ENCODE measurements at regions of chr2 and their contacts with region 1.

Region 1: DNA sequence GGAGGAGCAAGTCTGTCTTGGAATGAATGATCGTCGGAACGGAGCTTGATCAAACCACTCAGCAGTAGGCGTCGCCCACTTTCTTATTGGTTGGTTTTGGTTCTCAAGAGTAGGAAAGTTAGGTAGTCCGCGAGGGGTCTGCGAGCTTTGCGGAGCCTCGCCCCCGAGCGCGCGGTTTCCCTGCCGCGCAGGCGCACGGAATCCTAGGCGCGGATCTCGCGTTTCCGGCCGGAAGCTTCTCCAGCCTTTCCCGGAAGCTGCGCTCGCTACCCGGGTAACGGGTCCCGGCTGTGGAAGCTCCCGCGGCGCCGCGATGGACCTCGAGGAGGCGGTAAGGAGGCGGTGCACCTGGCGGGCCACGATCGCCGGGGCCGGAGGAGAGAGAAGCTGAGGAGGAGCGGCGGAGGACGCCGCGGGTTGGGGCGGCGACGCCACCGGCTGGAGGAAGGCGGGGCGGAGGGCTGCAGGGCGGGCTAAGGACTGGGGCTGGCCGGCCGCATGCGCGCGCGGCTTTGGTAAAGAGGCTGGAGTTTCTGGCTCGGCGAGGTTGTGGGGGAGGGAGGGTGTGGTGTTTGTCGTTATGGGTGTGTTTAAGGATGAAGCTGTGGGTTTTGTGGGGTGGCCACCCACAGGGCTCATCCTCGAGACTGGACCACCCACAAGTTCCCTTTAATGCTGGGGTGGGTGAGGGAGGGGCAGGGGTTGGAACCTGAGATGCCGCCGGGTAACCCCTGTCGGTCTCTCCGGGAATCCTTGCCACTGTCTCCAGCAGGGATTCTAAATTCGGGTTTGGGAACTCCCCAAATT is at the start of gene TAF1B:
- DNase-seq: peak; percentile 96
- ATAC-seq: peak; percentile 78
- H3K4me3 ChIP-seq: peak within 1 kb of the TSS; percentile 75
- H3K27ac ChIP-seq: peak within 1 kb of the TSS; percentile 88
- H3K4me1 ChIP-seq: peaks cover 35% of the 10 kb centered on the region
- H3K27me3 ChIP-seq: no peaks in the 10 kb centered on the region
- CTCF ChIP-seq: 0 out of 2 replicates have a peak, but pooled peaks have one; percentile 30
- total RNA-seq, gene TAF1B: 24.1 and 39.5 TPM in 2 replicates

Region 2: DNA sequence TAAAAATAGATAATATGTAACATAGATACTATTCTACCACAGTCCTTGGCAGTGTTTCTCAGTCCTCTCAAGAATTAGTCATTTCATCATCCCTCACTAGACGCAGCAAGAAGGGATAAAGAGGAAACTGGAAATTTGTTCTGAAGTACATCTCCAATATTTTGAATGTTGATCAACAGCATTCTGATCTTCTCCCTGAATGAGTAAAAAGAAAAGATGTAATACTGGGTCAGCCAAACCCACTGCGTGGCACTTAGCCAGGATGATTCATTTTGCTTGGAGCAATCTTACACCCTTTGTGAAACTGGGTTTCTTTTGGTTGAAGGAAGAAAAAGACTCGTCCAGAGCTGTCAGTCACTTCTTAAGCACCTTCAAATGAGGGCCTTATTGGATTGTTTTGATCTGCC is 53.9 kb after region 1 on chr2:
- CTCF ChIA-PET with region 1: no interaction called
- POLR2A ChIA-PET with region 1: no interaction called
- intact Hi-C with region 1: loop called (anchors 10 kb)
- DNase-seq: peak; percentile 99
- ATAC-seq: peak; percentile 93
- H3K4me3 ChIP-seq: no peak overlapping the region
- H3K27ac ChIP-seq: peak overlapping the region; percentile 25
- H3K4me1 ChIP-seq: peaks cover 27% of the 10 kb centered on the region
- H3K27me3 ChIP-seq: no peaks in the 10 kb centered on the region
- CTCF ChIP-seq: no peak

Region 3: DNA sequence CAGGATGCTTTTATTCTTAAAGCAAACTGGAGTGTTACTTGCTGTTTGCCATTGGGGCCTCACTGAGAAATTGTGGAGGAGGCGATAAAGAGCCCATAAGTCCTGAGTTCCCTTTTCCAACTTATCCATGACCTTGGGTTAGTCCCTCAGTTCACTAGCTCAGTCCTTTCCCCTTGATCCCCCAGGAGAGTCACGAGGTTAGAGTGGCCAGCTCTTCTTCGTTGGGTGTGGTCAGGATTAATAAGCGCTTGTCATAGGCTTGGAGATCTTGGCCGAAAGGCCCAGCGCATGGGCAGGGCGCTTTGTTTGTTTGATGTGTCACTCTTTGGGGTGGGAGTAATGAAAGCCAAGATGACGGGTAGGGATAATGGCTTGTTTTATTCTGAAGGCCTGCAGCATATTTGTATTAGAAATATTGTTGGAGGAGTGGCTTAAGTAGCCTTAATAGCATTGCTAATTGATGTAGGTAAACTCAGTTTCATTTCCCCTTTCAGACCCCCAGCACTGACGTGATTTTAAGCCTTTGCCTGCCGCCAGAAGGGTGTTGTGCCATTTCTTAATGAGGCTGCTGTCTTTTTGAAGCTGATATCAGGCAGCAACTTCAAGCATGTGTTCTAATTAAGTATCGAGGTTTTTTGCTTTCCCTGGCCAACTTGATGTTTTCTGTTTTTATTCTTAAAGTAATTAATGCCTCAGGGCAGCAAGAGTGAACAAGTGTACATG is 123.8 kb after region 1 on chr2:
- CTCF ChIA-PET with region 1: no interaction called
- POLR2A ChIA-PET with region 1: no interaction called
- intact Hi-C with region 1: no loop called
- DNase-seq: peak; percentile 69
- ATAC-seq: peak; percentile 94
- H3K4me3 ChIP-seq: no peak overlapping the region
- H3K27ac ChIP-seq: peak overlapping the region; percentile 54
- H3K4me1 ChIP-seq: peaks cover 28% of the 10 kb centered on the region
- H3K27me3 ChIP-seq: no peaks in the 10 kb centered on the region
- CTCF ChIP-seq: no peak